ENCODE measurements at regions of chr1 and their contacts with region 1.

Region 1: GRCh38 chr1:202009326-202010179 is 834 bp upstream of the ELF3 start:
- DNase-seq: peak in 1 of 2 donors; percentile 68
- ATAC-seq: peak; percentile 83
- H3K4me3 ChIP-seq: no peak overlapping the region
- H3K27ac ChIP-seq: no peak overlapping the region
- H3K4me1 ChIP-seq: no peaks in the 10 kb centered on the region
- H3K27me3 ChIP-seq: no peaks in the 10 kb centered on the region

Region 2: DNA sequence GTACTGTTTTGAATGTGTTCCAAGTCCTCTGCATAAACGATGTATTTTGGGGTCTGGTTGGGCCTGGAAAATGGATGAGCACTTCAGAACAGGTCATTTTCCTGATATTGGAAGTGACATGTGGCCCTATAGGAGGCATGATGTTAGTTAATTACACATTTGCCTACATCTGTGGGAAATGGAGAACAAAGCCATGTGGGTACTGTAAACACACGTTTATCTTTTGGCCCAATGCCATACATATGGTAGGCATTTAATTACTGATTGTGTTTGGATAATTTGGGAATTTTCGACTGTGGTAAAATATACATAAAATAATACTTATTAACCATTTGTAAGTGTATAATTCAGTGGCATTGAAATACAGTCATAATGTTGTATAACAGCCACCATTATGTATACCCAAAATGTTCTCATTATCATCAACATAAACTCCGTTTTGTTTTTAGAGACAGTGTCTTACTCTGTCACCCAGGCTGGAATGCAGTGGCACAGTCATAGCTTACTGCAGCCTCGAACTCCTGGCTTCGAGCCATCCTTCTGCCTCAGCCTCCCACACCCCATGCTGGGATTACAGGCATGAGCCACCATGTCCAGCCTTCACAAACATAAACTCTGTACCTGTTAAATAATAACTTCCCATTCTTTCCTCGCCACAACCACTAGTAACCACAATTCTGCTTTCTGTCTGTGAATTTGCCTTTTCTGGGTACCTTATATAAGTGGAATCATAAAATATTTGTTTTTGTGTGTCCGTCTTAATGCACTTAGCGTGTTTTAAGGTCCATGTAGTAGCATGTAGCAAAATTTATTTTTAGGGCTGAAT is 39.0 kb before region 1 on chr1:
- intact Hi-C with region 1: no loop called
- DNase-seq: no peak
- ATAC-seq: no peak
- H3K4me3 ChIP-seq: no peak overlapping the region
- H3K27ac ChIP-seq: peak overlapping the region in 1 of 2 donors; percentile 40
- H3K4me1 ChIP-seq: no peaks in the 10 kb centered on the region
- H3K27me3 ChIP-seq: no peaks in the 10 kb centered on the region

Region 3: GRCh38 chr1:202122639-202123335 is 113.2 kb after region 1 on chr1 and contains the start of gene GPR37L1:
- intact Hi-C with region 1: loop called (anchors 1 to 2 kb)
- DNase-seq: peak in 1 of 2 donors; percentile 87
- ATAC-seq: peak; percentile 70
- H3K4me3 ChIP-seq: no peak within 1 kb of the TSS
- H3K27ac ChIP-seq: no peak within 1 kb of the TSS
- H3K4me1 ChIP-seq: no peaks in the 10 kb centered on the region
- H3K27me3 ChIP-seq: no peaks in the 10 kb centered on the region
- total RNA-seq, gene GPR37L1: 0.06 TPM in 1 of 2 donors, not detected in the other

Measured in aorta (tissue), 5 donors.